Activated naive CD4-positive, alpha-beta T cell treated with anti-CD3 and anti-CD28 coated beads, Interleukin-2, amount 10 ng/mL, durations not matched to agents 7 days and 5 days (primary cell): ENCODE measurements at regions of chr15 and their contacts with region 1.

Region 1: GRCh38 chr15:74906446-74907162 is at the start of gene FAM219B:
- DNase-seq: peak; percentile 85
- H3K4me3 Mint-ChIP-seq: peak within 1 kb of the TSS; percentile 99
- H3K27ac Mint-ChIP-seq: peak within 1 kb of the TSS; percentile 94
- H3K4me1 Mint-ChIP-seq: peaks cover 44% of the 10 kb centered on the region
- H3K27me3 Mint-ChIP-seq: no peaks in the 10 kb centered on the region

Region 2: DNA sequence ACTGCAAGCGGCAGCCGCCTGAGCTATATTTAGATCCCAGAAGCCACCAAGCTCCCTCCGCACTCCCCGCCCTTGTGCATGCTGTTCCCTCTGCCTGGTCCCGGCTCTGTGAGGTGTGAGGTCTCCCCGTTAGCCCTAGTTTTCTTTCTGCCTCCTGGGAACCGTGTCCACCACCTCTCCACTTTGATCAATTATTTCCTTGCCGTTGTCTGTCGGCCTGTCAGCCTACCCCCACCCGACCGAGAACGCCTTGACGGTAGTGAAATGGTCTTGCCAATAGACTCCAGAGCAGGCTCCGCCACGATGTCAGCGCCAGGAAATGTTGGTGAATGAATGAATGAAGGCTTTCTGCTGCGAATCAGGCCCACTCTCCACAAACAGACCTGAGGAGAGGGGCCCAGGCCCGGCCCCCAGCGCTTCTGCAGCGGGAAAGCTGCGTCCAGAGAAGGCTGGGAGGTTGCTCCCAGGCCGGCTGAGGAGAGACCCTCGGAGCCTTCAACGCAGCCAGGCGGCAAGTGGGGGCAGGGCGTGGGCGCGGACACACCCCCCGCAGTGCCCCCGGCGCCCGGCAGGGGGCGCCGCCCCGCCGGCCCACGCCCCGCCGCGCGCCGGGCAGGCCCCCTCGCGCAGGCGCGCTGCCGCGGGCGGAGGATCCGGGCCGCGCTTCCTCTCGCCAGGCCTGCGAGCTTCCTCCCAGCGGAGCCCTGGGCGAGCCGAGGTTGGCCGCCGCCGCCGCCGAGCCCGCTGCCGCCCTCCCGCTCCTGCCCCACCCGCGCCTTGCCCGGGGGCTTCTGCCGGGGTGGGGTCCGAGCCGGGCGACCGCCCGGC is 125.0 kb before region 1 on chr15 and contains the start of gene CSK:
- CTCF ChIA-PET with region 1: interaction called, 11 read pairs
- DNase-seq: peak; percentile 80
- H3K4me3 Mint-ChIP-seq: peak within 1 kb of the TSS; percentile 91
- H3K27ac Mint-ChIP-seq: peak within 1 kb of the TSS; percentile 99
- H3K4me1 Mint-ChIP-seq: peaks cover 62% of the 10 kb centered on the region
- H3K27me3 Mint-ChIP-seq: no peaks in the 10 kb centered on the region

Region 3: GRCh38 chr15:74857082-74857655 is 49.4 kb before region 1 on chr15:
- CTCF ChIA-PET with region 1: interaction called, 11 read pairs
- DNase-seq: no peak
- H3K4me3 Mint-ChIP-seq: no peak overlapping the region
- H3K27ac Mint-ChIP-seq: peak overlapping the region; percentile 58
- H3K4me1 Mint-ChIP-seq: peaks cover 34% of the 10 kb centered on the region
- H3K27me3 Mint-ChIP-seq: no peaks in the 10 kb centered on the region

Region 4: GRCh38 chr15:74884428-74885223 is 22.0 kb before region 1 on chr15:
- CTCF ChIA-PET with region 1: interaction called, 17 read pairs
- DNase-seq: no peak
- H3K4me3 Mint-ChIP-seq: no peak overlapping the region
- H3K27ac Mint-ChIP-seq: no peak overlapping the region
- H3K4me1 Mint-ChIP-seq: peaks cover 32% of the 10 kb centered on the region
- H3K27me3 Mint-ChIP-seq: peaks cover 4% of the 10 kb centered on the region

Region 5: GRCh38 chr15:74920456-74920855 is 13.9 kb after region 1 on chr15:
- CTCF ChIA-PET with region 1: interaction called, 10 read pairs
- DNase-seq: no peak
- H3K4me3 Mint-ChIP-seq: no peak overlapping the region
- H3K27ac Mint-ChIP-seq: no peak overlapping the region
- H3K4me1 Mint-ChIP-seq: no peaks in the 10 kb centered on the region
- H3K27me3 Mint-ChIP-seq: no peaks in the 10 kb centered on the region